ENCODE measurements at regions of chr3 and their contacts with region 1.

Region 1: DNA sequence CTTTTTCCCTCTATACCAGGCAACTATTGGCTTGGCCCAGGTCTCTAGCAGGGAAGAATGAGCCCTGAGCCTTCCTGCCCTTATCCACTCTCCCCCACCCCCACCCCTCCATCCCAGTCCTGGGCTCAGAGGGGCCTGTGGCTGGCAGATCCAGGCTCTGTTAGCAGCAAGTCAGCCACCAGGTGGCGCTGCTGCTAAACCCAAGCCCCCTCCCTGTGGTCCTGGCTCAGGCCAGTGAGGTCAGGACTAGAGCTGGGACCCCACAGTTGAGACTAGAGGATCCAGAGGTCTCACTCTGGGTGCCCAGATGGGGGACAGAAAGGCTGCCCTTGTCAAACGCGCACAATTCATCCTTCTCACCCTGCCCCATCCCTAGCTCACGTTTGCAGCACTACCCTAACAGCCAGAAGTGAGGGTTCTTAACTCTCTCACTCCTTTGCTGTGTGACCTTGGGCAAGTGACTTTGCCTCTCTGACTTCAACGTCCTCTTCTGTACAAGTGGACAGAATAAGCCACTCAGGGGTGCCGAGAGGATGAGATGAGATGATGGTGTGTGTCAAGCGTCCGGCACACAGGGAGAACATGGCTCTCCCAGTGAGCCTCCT is 46.8 kb upstream of the SLC6A1 start:
- DNase-seq: peak; percentile 53 to 75
- ATAC-seq: peak; percentile 81 to 96
- H3K4me3 ChIP-seq: no peak overlapping the region
- H3K27ac ChIP-seq: no peak overlapping the region
- H3K4me1 ChIP-seq: no peaks in the 10 kb centered on the region
- CTCF ChIP-seq: peak; percentile 65
- EP300 ChIP-seq: no peak
- POLR2A ChIP-seq: no peak
- RAD21 ChIP-seq: peak; percentile 63 to 74

Region 2: DNA sequence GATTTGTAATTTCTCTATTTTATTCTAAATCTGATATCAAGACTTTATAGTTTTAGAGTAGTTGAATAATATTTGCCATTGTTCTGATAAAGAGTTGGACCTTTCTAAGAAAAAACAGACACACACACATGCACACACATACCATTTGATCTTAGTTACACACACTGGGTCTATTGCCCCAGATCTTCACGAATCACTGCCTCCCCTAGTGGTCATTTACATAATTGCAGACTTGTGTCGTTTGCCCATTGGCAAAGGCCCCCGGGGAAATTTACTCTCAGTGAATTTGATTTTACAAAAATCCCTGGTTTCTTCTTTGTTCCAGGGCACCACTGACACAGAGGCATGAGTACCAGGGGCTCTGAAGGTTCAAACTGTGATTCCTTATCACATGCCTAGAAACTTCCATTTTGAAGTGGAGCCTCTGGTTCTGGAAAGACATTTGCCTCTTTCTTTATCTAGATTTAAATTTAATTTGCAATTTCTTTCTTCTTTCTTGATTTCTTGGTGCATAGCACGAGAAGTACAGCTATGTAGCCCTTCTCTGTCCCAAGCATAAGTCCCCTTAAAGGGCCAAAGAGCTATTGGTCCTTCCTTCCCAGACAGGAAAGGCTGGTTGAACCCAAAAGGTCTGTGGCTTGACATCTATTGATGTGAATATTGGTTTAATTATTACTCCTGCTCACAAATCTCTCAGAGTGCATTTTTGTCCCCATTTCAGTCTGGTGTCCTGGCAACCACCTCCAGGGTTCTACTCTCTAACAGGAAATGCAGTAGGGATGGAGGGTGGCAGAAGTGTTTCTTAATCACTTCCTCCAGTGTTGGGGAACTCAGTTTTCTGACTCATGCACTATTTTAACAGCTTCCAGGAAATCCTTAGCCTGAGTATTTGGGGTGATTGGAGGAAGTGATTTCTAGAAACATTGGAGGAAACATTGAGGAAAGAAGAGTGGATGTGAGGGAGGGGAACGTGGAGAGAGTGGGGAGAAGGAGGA is 162.1 kb before region 1 on chr3:
- CTCF ChIA-PET with region 1: no interaction called
- POLR2A ChIA-PET with region 1: no interaction called
- DNase-seq: peak; percentile 26 to 40
- ATAC-seq: peak in 1 of 2 experiments; percentile 72; a peak in 3 of 6 replicates
- H3K4me3 ChIP-seq: no peak overlapping the region
- H3K27ac ChIP-seq: no peak overlapping the region
- H3K4me1 ChIP-seq: no peaks in the 10 kb centered on the region
- CTCF ChIP-seq: peak; percentile 47
- EP300 ChIP-seq: no peak
- POLR2A ChIP-seq: no peak
- RAD21 ChIP-seq: peak in 1 of 2 experiments; percentile 35; a peak in 1 of 5 replicates

Region 3: GRCh38 chr3:10926811-10927521 is 18.8 kb before region 1 on chr3:
- CTCF ChIA-PET with region 1: interaction called, 14 read pairs
- POLR2A ChIA-PET with region 1: no interaction called
- DNase-seq: no peak
- ATAC-seq: 0 out of 6 replicates have a peak, but pooled peaks of 1 of the 2 experiments have one; percentile 26
- H3K4me3 ChIP-seq: no peak overlapping the region
- H3K27ac ChIP-seq: no peak overlapping the region
- H3K4me1 ChIP-seq: no peaks in the 10 kb centered on the region
- CTCF ChIP-seq: no peak
- EP300 ChIP-seq: no peak
- POLR2A ChIP-seq: no peak
- RAD21 ChIP-seq: no peak

Region 4: DNA sequence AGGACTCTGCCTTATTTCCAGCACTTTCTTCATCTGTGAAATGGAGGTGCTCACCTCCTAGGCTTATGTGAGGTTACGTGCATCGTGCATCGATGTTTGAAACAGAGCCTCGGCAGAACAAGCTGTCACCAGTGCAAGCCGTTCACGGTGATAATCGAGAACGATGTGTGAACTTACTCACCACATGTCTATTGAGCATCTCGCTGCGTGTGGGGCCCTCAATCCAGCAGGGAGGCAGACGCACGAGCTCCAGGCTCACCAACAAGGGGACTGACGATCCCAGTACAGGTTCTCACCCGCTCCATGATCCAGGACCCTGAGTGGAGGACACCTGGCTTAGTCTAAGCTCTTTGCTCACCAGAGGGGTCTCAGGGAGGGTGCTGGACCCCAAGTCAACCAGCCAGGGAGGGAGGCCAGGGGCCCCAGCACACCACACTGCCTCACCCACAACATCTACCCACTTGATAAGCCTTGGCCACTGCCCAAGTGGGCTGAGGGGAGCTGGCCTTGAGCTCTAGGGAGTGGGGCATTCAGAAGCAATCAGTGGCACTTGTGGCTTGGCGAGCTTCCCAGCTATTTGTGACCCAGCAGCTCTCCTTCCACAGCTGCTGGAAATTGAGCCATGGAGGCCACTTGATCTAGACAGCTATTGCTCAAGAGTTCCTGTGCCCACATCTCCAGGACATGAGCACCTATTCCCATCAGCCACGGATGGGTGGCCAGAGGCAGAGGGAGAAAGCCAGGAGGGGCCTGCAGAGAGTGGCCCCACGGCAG is 12.4 kb after region 1 on chr3:
- CTCF ChIA-PET with region 1: interaction called, 71 read pairs
- POLR2A ChIA-PET with region 1: no interaction called
- DNase-seq: no peak
- ATAC-seq: no peak
- H3K4me3 ChIP-seq: no peak overlapping the region
- H3K27ac ChIP-seq: no peak overlapping the region
- H3K4me1 ChIP-seq: no peaks in the 10 kb centered on the region
- CTCF ChIP-seq: no peak
- EP300 ChIP-seq: no peak
- POLR2A ChIP-seq: no peak
- RAD21 ChIP-seq: no peak

Region 5: GRCh38 chr3:10964537-10965167 is 18.9 kb after region 1 on chr3:
- CTCF ChIA-PET with region 1: interaction called, 71 read pairs
- POLR2A ChIA-PET with region 1: no interaction called
- DNase-seq: no peak
- ATAC-seq: peak in 1 of 2 experiments; percentile 64; a peak in 3 of 6 replicates
- H3K4me3 ChIP-seq: no peak overlapping the region
- H3K27ac ChIP-seq: no peak overlapping the region
- H3K4me1 ChIP-seq: no peaks in the 10 kb centered on the region
- CTCF ChIP-seq: no peak
- EP300 ChIP-seq: no peak
- POLR2A ChIP-seq: no peak
- RAD21 ChIP-seq: no peak

Region 6: GRCh38 chr3:10983219-10983916 is 37.6 kb after region 1 on chr3:
- CTCF ChIA-PET with region 1: interaction called, 72 read pairs
- POLR2A ChIA-PET with region 1: no interaction called
- DNase-seq: peak; percentile 37 to 87
- ATAC-seq: peak; percentile 83 to 94
- H3K4me3 ChIP-seq: no peak overlapping the region
- H3K27ac ChIP-seq: no peak overlapping the region
- H3K4me1 ChIP-seq: peaks cover 4% of the 10 kb centered on the region; the same call in 2 of the 3 replicates
- CTCF ChIP-seq: peak; percentile 74
- EP300 ChIP-seq: no peak
- POLR2A ChIP-seq: no peak
- RAD21 ChIP-seq: peak; percentile 35 to 50; a peak in 4 of 5 replicates

Region 7: GRCh38 chr3:11050666-11051323 is 105.0 kb after region 1 on chr3:
- CTCF ChIA-PET with region 1: interaction called, 164 read pairs
- POLR2A ChIA-PET with region 1: no interaction called
- DNase-seq: no peak
- ATAC-seq: 0 out of 6 replicates have a peak, but pooled peaks of 1 of the 2 experiments have one; percentile 19
- H3K4me3 ChIP-seq: no peak overlapping the region
- H3K27ac ChIP-seq: no peak overlapping the region
- H3K4me1 ChIP-seq: no peaks in the 10 kb centered on the region; the same call in 2 of the 3 replicates
- CTCF ChIP-seq: no peak
- EP300 ChIP-seq: no peak
- POLR2A ChIP-seq: no peak
- RAD21 ChIP-seq: no peak